GM23248 (cell line): ENCODE measurements at regions of chr14 and their contacts with region 1.

Region 1: GRCh38 chr14:68788996-68789820 is 3.7 kb downstream of the ZFP36L1 start:
- DNase-seq: peak; percentile 88
- H3K4me3 ChIP-seq: peak overlapping the region; percentile 80
- H3K27ac ChIP-seq: peak overlapping the region; percentile 100
- H3K4me1 ChIP-seq: peaks cover 40% of the 10 kb centered on the region
- H3K27me3 ChIP-seq: no peaks in the 10 kb centered on the region

Region 2: DNA sequence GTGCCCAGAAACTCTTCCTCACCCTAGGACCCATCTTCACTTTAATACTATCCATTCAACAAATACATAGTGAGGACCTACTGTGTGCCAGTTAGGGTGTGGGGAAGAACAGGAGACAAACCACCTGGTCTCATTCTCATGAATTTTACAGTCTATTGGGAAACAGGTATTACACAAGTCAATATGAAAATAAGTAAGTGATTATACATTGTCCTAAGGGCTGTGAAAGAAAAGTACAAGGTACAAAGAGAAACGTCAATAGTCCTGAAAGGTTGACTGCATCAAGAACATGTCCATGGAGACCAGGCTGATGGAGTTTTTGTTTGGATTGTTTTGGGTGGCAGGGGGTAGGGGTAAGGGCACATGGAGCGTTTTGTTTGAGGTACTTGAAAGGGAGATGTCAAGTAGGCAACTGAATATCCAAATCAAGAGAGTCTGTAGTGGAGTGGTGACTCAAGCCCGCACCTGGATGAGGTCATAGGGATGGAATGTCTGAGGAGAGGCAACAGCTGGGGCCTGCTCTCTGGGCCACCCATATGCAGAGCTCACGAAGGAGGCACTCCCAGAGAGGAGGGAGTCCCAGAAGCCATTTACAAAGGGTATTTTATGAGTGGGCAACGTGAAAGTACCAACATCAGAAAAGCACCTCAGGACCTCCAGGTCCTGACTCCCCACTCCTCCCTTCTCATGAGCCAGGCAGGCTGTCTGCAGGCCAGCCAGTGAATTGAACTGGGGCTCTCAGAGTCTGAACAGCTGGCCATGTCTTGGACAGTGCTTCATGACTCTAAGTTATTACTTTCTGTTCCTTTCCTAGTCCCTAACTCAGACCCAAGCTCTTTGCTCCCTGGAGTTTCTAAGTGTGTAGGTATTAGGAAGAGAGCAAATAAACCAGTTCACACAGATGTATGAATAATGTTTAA is 268.3 kb before region 1 on chr14:
- in situ Hi-C with region 1: loop called (anchors 10 kb)
- DNase-seq: no peak
- H3K4me3 ChIP-seq: no peak overlapping the region
- H3K27ac ChIP-seq: no peak overlapping the region
- H3K4me1 ChIP-seq: peaks cover 36% of the 10 kb centered on the region
- H3K27me3 ChIP-seq: no peaks in the 10 kb centered on the region